Activated CD4-positive, alpha-beta T cell treated with anti-CD3 and anti-CD28 coated beads, Interleukin-2, amount 10 ng/mL, durations not matched to agents 24 days and 14 days (primary cell): ENCODE measurements at regions of chr7 and their contacts with region 1.

Region 1: GRCh38 chr7:2978403-2978802 is 65.3 kb downstream of the CARD11 start:
- DNase-seq: peak; percentile 92
- H3K4me3 Mint-ChIP-seq: peak overlapping the region; percentile 82
- H3K27ac Mint-ChIP-seq: peak overlapping the region; percentile 94
- H3K4me1 Mint-ChIP-seq: peaks cover 56% of the 10 kb centered on the region
- H3K27me3 Mint-ChIP-seq: no peaks in the 10 kb centered on the region

Region 2: GRCh38 chr7:2529161-2530070 is 449.0 kb before region 1 on chr7:
- intact Hi-C with region 1: no loop called
- DNase-seq: peak; percentile 87
- H3K4me3 Mint-ChIP-seq: peak overlapping the region; percentile 83
- H3K27ac Mint-ChIP-seq: peak overlapping the region; percentile 98
- H3K4me1 Mint-ChIP-seq: peaks cover 42% of the 10 kb centered on the region
- H3K27me3 Mint-ChIP-seq: no peaks in the 10 kb centered on the region

Region 3: GRCh38 chr7:2771274-2771731 is 207.1 kb before region 1 on chr7:
- intact Hi-C with region 1: loop called (anchors 10 kb)
- DNase-seq: no peak
- H3K4me3 Mint-ChIP-seq: no peak overlapping the region
- H3K27ac Mint-ChIP-seq: peak overlapping the region; percentile 86
- H3K4me1 Mint-ChIP-seq: peaks cover 36% of the 10 kb centered on the region
- H3K27me3 Mint-ChIP-seq: no peaks in the 10 kb centered on the region

Region 4: DNA sequence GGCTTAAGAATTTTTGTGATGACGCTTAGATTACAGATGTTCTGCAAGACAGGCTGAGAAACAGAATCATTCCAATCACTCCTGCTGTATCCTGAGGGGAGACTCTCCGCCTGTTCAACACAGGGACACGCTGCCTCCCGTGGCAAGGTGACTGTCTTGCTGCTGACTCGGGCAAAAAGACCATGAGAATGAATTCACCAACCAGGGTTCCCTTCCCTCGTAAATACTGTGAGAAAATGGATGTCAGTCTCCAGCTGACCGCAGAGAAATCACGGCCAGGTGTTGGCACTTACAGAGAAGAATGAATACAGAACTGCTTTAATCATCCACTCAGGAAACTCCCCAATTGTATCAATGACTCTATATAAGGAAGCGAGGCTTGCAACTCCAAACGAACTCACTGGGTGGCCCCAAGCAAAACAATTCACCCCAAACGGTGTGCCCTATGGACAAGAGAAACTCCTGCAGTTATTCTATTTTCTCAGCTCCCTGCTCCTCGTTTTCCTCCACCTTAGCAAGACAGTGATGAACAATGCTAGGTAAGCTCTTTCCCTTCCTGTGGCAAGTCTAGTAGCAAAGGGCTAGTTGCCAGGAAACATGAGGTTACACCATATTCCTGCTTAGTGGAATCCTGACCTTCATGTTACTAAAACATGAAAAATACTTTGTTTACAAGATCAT is 157.1 kb before region 1 on chr7:
- intact Hi-C with region 1: no loop called
- DNase-seq: no peak
- H3K4me3 Mint-ChIP-seq: no peak overlapping the region
- H3K27ac Mint-ChIP-seq: no peak overlapping the region
- H3K4me1 Mint-ChIP-seq: peaks cover 36% of the 10 kb centered on the region
- H3K27me3 Mint-ChIP-seq: no peaks in the 10 kb centered on the region

Region 5: DNA sequence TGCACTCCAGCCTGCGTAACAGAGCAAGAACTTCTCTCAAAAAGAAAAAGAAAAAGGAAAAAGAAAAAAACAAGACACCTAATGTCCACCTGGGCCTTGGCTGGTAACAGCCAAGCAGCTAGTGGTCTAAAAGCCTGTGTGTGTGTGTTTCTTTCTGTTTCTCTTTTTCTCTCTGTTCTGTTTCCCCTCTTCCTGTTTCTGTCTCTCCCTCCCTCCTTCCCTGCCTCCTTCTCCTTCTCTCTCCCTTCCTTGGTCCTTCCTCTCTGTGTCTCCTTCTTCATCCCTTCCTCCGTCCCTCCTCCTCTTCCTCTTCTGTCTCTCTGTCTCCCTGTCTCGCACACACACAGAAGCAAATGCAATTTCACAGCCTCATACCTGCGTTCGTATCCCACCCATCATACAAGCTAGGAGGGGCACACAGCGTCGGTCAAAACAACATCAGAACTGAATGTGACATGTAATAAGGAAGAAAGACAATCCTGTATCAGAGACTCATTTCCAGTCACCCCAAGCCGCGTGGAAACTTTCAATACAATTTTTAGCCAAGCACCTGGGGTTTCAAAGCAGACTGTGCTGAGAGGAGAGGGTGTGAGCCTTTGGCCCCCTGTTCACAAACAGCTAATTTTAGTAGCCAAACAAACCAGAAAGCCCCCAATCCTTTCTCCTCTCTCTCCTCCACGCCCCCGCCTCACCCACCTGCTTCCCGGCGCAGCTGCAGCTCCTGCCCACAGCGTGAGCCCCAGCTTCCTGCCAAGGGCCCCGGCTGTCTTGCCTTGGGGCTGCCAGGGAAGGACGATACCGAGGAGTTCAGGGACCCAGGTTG is 84.1 kb before region 1 on chr7:
- intact Hi-C with region 1: loop called (anchors 5 kb)
- DNase-seq: peak; percentile 86
- H3K4me3 Mint-ChIP-seq: peak overlapping the region; percentile 88
- H3K27ac Mint-ChIP-seq: peak overlapping the region; percentile 99
- H3K4me1 Mint-ChIP-seq: peaks cover 26% of the 10 kb centered on the region
- H3K27me3 Mint-ChIP-seq: no peaks in the 10 kb centered on the region

Region 6: GRCh38 chr7:2956526-2957368 is 21.7 kb before region 1 on chr7:
- intact Hi-C with region 1: loop called (anchors 2 kb)
- DNase-seq: peak; percentile 80
- H3K4me3 Mint-ChIP-seq: peak overlapping the region; percentile 55
- H3K27ac Mint-ChIP-seq: peak overlapping the region; percentile 87
- H3K4me1 Mint-ChIP-seq: peaks cover 60% of the 10 kb centered on the region
- H3K27me3 Mint-ChIP-seq: no peaks in the 10 kb centered on the region

Region 7: GRCh38 chr7:3028071-3028757 is 49.8 kb after region 1 on chr7:
- intact Hi-C with region 1: loop called (anchors 2 kb)
- DNase-seq: peak; percentile 68
- H3K4me3 Mint-ChIP-seq: peak overlapping the region; percentile 66
- H3K27ac Mint-ChIP-seq: peak overlapping the region; percentile 87
- H3K4me1 Mint-ChIP-seq: peaks cover 34% of the 10 kb centered on the region
- H3K27me3 Mint-ChIP-seq: no peaks in the 10 kb centered on the region

Region 8: DNA sequence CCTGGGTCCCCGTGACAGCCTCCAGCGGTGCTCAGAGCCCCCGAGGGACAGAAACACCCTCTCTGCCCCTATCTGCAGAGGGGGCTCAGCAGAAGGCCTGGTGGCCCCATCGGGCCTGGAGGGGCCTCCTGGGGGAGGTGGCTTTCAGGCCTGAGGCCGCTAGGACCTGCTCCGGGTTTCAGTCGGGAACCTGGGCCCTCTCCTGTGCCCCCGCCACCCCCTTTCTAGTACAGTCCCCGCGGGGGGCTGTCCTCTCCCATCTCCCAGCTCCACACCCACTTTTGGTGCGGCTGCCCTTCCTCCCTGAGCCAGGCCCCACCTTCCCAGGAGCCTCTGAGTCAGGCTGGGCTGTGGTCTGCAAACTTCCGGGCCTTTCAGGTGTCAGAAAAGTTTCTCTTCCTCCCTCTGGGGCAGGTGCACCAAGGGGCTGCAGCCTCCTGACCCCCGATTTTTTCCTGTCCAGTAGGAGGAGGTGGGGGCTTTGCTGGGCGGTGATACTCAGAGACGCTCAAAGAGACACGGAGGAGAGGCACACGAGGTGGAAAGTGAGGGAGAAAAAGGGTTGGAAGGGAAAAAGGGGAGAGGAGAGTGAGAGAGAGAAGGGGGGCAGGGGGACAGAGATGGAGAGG is 64.6 kb after region 1 on chr7:
- intact Hi-C with region 1: loop called (anchors 2 kb)
- DNase-seq: peak; percentile 91
- H3K4me3 Mint-ChIP-seq: peak overlapping the region; percentile 96
- H3K27ac Mint-ChIP-seq: peak overlapping the region; percentile 94
- H3K4me1 Mint-ChIP-seq: peaks cover 40% of the 10 kb centered on the region
- H3K27me3 Mint-ChIP-seq: no peaks in the 10 kb centered on the region

Region 9: DNA sequence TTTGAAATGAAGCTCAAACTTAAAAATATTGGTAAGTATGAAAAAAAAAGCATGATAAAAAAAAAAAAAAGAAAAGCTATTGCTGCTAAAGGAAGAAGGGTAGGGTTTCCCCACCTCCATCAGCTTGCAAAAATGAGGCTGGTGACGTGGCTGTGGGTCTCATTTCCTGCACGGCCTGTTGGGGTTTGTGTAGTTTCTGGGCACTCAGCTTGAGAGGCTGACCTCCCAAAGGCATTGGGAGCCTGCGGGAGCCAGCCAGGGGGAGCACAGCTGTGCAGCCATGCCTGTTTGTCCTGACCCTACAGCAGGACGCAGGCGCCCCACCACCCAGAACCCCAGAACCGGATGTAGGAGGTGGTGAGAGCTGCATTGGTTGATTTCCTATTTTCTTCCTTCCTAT is 114.1 kb after region 1 on chr7:
- intact Hi-C with region 1: loop called (anchors 5 kb)
- DNase-seq: peak; percentile 93
- H3K4me3 Mint-ChIP-seq: peak overlapping the region; percentile 22
- H3K27ac Mint-ChIP-seq: peak overlapping the region; percentile 86
- H3K4me1 Mint-ChIP-seq: peaks cover 51% of the 10 kb centered on the region
- H3K27me3 Mint-ChIP-seq: no peaks in the 10 kb centered on the region